Adrenal gland (tissue), 19 donors: ENCODE measurements at regions of chr1 and their contacts with region 1.

Region 1: GRCh38 chr1:201559679-201560162 is 20.8 kb downstream of the NAV1 start:
- DNase-seq: peak; percentile 70 to 90 (median 79)
- H3K4me3 ChIP-seq: no peak overlapping the region
- H3K27ac ChIP-seq: no peak overlapping the region
- H3K4me1 ChIP-seq: peaks cover 0 to 4% of the 10 kb centered on the region in 2 donors
- H3K27me3 ChIP-seq: no peaks in the 10 kb centered on the region
- CTCF ChIP-seq: peak; percentile 92 to 98 (median 97)
- POLR2A ChIP-seq: peak in 1 of 2 donors; percentile 17

Region 2: DNA sequence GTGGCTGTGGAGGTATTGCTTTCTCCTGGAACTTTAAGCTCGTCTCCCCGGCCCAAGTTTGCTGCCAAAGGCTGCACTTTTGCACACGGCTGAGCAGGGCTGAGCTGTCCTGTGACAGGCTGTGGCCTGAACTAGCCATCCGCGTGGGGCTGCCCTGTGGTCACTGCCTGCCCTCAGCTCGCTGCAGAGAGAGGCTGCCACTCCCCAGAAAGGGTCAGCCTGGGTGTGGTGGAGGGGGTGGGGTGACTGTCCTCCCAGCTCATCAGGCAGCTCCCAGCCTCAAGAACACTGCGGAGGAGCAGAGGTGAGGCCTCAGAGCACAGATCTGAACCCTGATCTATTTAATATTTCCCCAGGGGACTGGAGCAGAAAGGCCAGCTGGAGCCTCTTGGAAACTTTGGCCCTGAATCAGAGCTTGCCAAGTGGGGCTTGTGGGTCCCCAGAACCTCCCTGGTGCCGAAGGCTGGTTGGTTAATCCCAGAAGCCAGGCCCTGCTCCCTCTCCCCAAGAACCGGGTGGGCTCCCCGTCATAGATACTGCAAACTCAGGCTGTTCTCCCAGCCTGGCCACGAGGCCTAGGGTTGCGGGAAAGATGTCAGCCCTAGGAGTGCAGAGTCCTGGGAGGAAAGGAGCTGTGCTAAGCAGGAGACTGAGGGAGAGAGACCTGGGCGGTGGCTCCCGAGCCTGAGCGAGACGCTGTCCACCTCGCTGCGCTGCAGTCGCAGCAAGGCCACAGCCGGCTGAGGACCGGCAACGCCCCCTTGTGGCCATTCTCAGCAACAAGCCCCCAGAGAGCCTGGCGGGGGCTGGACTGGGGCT is 144.1 kb after region 1 on chr1:
- intact Hi-C with region 1: loop called (anchors 2 kb)
- DNase-seq: peak; percentile 77 to 91 (median 82)
- H3K4me3 ChIP-seq: no peak overlapping the region
- H3K27ac ChIP-seq: peak overlapping the region in 2 of 5 donors; percentile 45 to 68
- H3K4me1 ChIP-seq: peaks cover 0 to 11% of the 10 kb centered on the region in 2 donors
- H3K27me3 ChIP-seq: no peaks in the 10 kb centered on the region
- CTCF ChIP-seq: peak; percentile 90 to 98 (median 96)
- POLR2A ChIP-seq: no peak

Region 3: DNA sequence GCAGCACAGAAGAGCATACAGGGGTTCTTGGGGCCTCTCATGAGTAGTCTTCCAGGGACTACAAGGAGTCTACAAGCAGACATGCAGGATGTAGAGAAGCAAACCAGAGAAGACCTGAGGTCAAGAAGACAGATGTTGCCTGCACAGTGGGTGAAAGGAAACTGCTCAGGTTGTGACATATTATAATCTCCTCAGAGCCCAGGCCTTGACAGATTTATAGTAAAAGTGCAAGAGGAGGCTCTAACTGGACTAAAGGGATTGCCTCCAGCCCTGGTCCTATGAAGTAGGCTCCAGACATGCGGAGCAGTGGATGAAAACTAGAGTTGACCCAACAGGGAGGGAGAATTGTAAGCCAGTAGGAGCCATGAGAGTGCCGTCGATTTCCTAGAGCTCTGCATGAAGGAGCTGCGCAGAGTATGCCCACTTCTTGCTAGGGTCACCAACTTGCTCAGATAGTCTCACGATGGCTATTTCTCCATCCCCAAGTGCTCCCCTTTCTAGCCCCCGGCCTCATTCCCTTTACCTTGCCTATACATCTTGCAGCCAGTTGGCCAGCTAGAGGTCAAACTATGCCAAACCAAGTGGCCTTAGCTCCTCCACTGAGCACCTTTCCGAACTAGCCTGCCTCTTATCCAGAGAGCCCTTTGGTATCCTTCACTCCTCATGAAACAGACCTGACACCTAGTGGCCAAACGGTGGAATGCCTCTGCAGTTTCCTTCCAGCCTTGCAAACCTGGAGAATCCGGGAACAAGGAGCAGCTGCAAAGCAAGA is 233.0 kb after region 1 on chr1:
- intact Hi-C with region 1: loop called (anchors 2 to 5 kb)
- DNase-seq: peak; percentile 73 to 94 (median 81)
- H3K4me3 ChIP-seq: no peak overlapping the region
- H3K27ac ChIP-seq: peak overlapping the region in 4 of 5 donors; percentile 5 to 76 (median 43)
- H3K4me1 ChIP-seq: peaks cover 11 to 40% of the 10 kb centered on the region in 2 donors
- H3K27me3 ChIP-seq: no peaks in the 10 kb centered on the region
- CTCF ChIP-seq: peak; percentile 95 to 99 (median 98)
- POLR2A ChIP-seq: no peak